Activated naive CD4-positive, alpha-beta T cell treated with anti-CD3 and anti-CD28 coated beads for 36 hours (primary cell): ENCODE measurements at regions of chr5 and their contacts with region 1.

Region 1: DNA sequence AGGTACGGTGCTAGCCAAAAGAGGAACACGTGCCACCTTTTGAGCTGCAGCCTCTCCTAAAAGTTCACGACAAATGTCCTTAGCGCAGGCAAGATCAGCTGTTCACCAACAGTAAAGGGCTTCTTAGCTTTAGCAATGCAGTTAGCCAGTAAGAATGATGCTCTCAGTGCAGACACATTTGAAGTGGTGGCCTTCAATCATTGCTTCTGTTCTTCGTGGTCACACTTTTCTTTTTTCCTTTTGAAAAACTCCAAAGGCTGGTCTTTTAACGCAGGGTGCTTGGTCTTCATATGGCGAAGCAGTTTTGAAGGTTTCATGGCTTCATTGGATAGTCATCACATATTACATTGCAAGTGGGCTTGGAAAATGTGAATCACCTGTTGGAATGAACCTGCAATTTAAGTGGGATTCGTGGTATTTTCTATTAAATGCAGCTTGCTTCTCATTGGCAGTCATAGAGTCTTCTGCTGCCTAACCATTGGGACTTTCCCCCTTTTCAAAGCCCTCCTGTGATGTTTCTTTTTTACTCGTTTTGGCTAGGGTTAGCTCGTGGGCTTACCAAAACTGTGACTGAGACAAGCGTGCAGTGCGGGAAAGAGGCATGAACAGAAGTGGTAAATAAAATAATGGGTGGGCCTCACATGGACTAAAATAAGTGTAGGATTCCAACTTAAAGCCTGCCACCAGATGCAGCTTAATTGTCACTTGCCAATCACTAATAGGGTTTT is 100.9 kb downstream of the MRPL36 start:
- DNase-seq: peak; percentile 60
- H3K4me3 Mint-ChIP-seq: no peak overlapping the region
- H3K27ac Mint-ChIP-seq: peak overlapping the region; percentile 23
- H3K4me1 Mint-ChIP-seq: peaks cover 24% of the 10 kb centered on the region
- H3K27me3 Mint-ChIP-seq: peaks cover 13% of the 10 kb centered on the region

Region 2: GRCh38 chr5:1792842-1793266 is 94.1 kb after region 1 on chr5:
- CTCF ChIA-PET with region 1: no interaction called
- intact Hi-C with region 1: loop called (anchors 2 kb)
- DNase-seq: peak; percentile 89
- H3K4me3 Mint-ChIP-seq: peak overlapping the region; percentile 59
- H3K27ac Mint-ChIP-seq: peak overlapping the region; percentile 96
- H3K4me1 Mint-ChIP-seq: peaks cover 74% of the 10 kb centered on the region
- H3K27me3 Mint-ChIP-seq: no peaks in the 10 kb centered on the region

Region 3: GRCh38 chr5:2129568-2130272 is 431.0 kb after region 1 on chr5:
- CTCF ChIA-PET with region 1: no interaction called
- intact Hi-C with region 1: no loop called
- DNase-seq: no peak
- H3K4me3 Mint-ChIP-seq: no peak overlapping the region
- H3K27ac Mint-ChIP-seq: no peak overlapping the region
- H3K4me1 Mint-ChIP-seq: no peaks in the 10 kb centered on the region
- H3K27me3 Mint-ChIP-seq: peaks cover 11% of the 10 kb centered on the region